ENCODE measurements at regions of chr1 and their contacts with region 1.

Region 1: GRCh38 chr1:182677397-182678098 is 6.8 kb downstream of the RGS8 start:
- DNase-seq: peak; percentile 61
- ATAC-seq: peak; percentile 93
- H3K4me3 ChIP-seq: no peak overlapping the region
- H3K27ac ChIP-seq: no peak overlapping the region
- H3K4me1 ChIP-seq: peaks cover 36% of the 10 kb centered on the region; the same call in 1 of the 2 replicates
- H3K27me3 ChIP-seq: no peaks in the 10 kb centered on the region
- CTCF ChIP-seq: no peak
- EP300 ChIP-seq: peak; percentile 78 to 79; a peak in 3 of 4 replicates
- POLR2A ChIP-seq: no peak
- RAD21 ChIP-seq: no peak

Region 2: GRCh38 chr1:182595641-182596240 is 81.8 kb before region 1 on chr1:
- CTCF ChIA-PET with region 1: interaction called, 121 read pairs
- POLR2A ChIA-PET with region 1: interaction called, 3 read pairs
- RAD21 ChIA-PET with region 1: interaction called, 15 read pairs
- SMC1A ChIA-PET with region 1: interaction called, 29 read pairs
- in situ Hi-C with region 1: no loop called
- intact Hi-C with region 1: no loop called
- DNase-seq: no peak
- ATAC-seq: peak; percentile 56
- H3K4me3 ChIP-seq: no peak overlapping the region
- H3K27ac ChIP-seq: no peak overlapping the region
- H3K4me1 ChIP-seq: peaks cover 4% of the 10 kb centered on the region; the same call in 1 of the 2 replicates
- H3K27me3 ChIP-seq: no peaks in the 10 kb centered on the region
- CTCF ChIP-seq: peak; percentile 87 to 91 (median 88)
- EP300 ChIP-seq: no peak
- POLR2A ChIP-seq: no peak
- RAD21 ChIP-seq: peak; percentile 92

Region 3: GRCh38 chr1:182614796-182615454 is 62.6 kb before region 1 on chr1:
- CTCF ChIA-PET with region 1: interaction called, 30 read pairs
- POLR2A ChIA-PET with region 1: interaction called, 22 read pairs
- RAD21 ChIA-PET with region 1: interaction called, 44 read pairs
- SMC1A ChIA-PET with region 1: interaction called, 37 read pairs
- in situ Hi-C with region 1: no loop called
- intact Hi-C with region 1: loop called (anchors 1 kb)
- DNase-seq: no peak
- ATAC-seq: peak; percentile 62
- H3K4me3 ChIP-seq: peak overlapping the region; percentile 63
- H3K27ac ChIP-seq: peak overlapping the region; percentile 95
- H3K4me1 ChIP-seq: peaks cover 66% of the 10 kb centered on the region
- H3K27me3 ChIP-seq: no peaks in the 10 kb centered on the region
- CTCF ChIP-seq: no peak
- EP300 ChIP-seq: peak in 1 of 2 experiments; percentile 54; a peak in 3 of 4 replicates
- POLR2A ChIP-seq: peak; percentile 84
- RAD21 ChIP-seq: peak; percentile 12; the same call in 1 of the 2 replicates

Region 4: DNA sequence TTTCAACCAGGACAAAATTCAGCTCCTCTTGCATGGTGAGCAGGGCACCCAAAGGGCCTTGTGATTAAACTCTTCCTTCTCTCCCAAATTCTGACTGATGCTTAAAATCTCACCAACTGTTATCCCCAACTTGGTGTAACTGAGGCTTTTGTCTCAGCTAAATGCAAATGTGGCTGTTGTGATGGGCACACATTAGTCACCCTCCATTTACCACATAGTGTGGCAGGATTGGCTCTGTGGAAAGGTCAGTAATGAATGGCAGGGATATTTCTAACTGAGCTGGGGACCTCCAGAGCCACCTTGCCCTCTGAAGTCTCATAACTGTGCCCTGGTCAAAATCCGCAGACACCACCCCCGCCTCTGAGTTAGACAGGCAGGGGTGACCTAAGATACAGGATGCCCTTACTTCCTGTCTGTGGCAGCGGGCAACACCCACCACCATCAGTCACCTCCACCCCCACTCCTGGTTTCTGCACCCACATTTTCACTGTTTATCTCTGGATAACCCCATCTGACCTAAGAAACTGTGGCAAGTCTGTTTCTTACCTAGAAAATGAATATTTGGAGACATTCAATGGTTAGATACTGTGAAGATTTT is 48.0 kb before region 1 on chr1:
- CTCF ChIA-PET with region 1: interaction called, 16 read pairs
- POLR2A ChIA-PET with region 1: interaction called, 11 read pairs
- RAD21 ChIA-PET with region 1: interaction called, 16 read pairs
- SMC1A ChIA-PET with region 1: interaction called, 34 read pairs
- in situ Hi-C with region 1: no loop called
- intact Hi-C with region 1: loop called (anchors 5 kb)
- DNase-seq: no peak
- ATAC-seq: peak; percentile 88
- H3K4me3 ChIP-seq: no peak overlapping the region
- H3K27ac ChIP-seq: no peak overlapping the region
- H3K4me1 ChIP-seq: peaks cover 52% of the 10 kb centered on the region
- H3K27me3 ChIP-seq: no peaks in the 10 kb centered on the region
- CTCF ChIP-seq: no peak
- EP300 ChIP-seq: peak; percentile 26 to 61; a peak in 2 of 4 replicates
- POLR2A ChIP-seq: no peak
- RAD21 ChIP-seq: no peak

Region 5: DNA sequence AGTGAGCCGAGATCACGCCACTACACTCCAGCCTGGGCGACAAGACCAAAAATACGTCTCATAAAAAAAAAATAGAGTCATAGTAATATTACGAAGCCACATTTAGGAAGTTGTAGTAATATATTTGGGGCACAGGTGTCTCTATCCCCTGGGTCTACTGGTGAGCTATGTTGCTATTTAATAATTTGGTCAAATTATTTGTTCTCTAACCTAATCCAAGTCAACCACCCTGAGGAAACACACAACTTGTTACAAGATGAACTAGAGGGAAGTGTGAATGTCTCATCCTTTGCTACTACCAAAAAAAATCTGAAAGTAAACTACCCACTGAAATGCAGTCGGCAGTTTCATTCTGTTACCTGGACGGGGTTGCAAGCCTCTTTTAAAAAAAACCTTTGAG is 28.5 kb before region 1 on chr1:
- CTCF ChIA-PET with region 1: interaction called, 12 read pairs
- POLR2A ChIA-PET with region 1: interaction called, 5 read pairs
- RAD21 ChIA-PET with region 1: interaction called, 24 read pairs
- SMC1A ChIA-PET with region 1: interaction called, 26 read pairs
- in situ Hi-C with region 1: no loop called
- intact Hi-C with region 1: no loop called
- DNase-seq: no peak
- ATAC-seq: peak; percentile 75
- H3K4me3 ChIP-seq: no peak overlapping the region
- H3K27ac ChIP-seq: no peak overlapping the region
- H3K4me1 ChIP-seq: peaks cover 41% of the 10 kb centered on the region
- H3K27me3 ChIP-seq: no peaks in the 10 kb centered on the region
- CTCF ChIP-seq: 0 out of 6 replicates have a peak, but pooled peaks of 1 of the 3 experiments have one; percentile 2
- EP300 ChIP-seq: no peak
- POLR2A ChIP-seq: no peak
- RAD21 ChIP-seq: peak; percentile 13; the same call in 1 of the 2 replicates

Region 6: DNA sequence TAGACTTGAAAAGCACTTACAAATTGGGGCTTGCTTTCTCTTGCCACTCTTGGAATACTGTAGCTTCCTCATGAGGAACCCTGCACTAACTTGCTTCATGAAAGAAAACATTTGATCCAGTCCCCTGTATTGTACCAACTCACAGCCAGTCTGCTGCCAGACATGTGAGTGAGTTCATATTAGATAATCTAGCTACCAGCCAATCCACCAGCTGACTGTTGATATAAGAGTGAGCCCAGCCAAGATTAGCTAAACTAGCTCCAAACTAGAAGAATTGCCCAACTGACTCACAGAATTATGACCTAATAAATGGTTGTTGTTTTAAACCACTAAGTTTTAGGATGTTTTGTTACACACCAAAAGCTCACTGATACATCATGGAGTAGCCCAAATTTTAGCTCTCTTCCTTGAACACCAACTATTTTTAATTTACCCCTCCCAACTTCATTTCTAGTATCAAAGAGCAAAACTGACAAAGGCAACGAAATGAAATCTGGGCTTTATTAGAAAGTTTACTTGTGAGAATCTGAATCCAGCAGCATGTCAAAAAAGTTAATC is 13.4 kb after region 1 on chr1:
- CTCF ChIA-PET with region 1: interaction called, 5 read pairs
- POLR2A ChIA-PET with region 1: interaction called, 5 read pairs
- RAD21 ChIA-PET with region 1: interaction called, 6 read pairs
- SMC1A ChIA-PET with region 1: interaction called, 23 read pairs
- in situ Hi-C with region 1: no loop called
- intact Hi-C with region 1: no loop called
- DNase-seq: no peak
- ATAC-seq: no peak
- H3K4me3 ChIP-seq: no peak overlapping the region
- H3K27ac ChIP-seq: no peak overlapping the region
- H3K4me1 ChIP-seq: no peaks in the 10 kb centered on the region
- H3K27me3 ChIP-seq: no peaks in the 10 kb centered on the region
- CTCF ChIP-seq: no peak
- EP300 ChIP-seq: no peak
- POLR2A ChIP-seq: no peak
- RAD21 ChIP-seq: no peak